ENCODE measurements at regions of chr16 and their contacts with region 1.

Region 1: DNA sequence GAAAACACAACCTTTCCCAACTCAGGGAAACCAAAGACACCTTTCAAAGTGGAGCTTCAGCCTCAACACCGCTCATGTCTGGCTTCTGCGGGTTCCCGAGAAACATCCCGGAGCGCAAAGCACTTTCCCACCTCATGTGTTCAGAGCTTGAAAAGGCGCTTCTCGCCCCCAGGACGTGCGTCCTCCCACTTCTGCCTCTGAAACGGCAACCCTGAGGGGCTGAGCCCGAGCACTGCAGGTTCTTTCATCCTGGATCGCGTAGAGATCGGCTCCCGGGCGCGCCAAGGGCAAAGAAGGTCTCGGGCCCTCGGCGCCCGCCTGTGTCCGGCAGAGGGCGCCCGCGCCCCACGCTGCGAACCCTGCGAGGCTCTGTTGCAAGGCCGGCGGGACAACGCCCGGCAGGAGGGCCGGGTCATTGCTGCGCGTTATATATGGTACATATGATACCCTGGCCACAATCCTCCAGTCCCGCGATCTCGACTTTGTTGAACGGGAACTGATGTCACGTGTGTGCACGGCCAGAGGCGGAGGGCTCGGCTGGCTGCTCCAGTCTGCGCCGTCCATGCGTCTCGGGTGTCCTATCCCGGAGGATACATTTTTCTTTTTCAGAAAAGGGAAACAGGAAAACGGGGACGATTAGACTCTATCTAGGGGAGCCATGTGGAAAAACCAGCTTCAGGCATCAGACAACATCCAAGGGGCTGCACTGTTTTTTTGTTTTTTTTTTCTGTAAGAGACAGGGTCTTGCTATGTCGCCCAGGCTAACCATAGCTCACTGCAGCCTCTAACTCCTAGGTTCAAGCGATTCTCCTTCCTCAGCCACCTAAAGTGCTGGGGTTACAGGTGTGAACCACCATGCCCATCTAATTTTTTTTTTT is 19.1 kb downstream of the COQ7 start:
- DNase-seq: peak; percentile 94
- H3K4me3 Mint-ChIP-seq: peak overlapping the region; percentile 71
- H3K27ac Mint-ChIP-seq: peak overlapping the region; percentile 58
- H3K4me1 Mint-ChIP-seq: peaks cover 19% of the 10 kb centered on the region
- H3K27me3 Mint-ChIP-seq: no peaks in the 10 kb centered on the region
- CTCF ChIP-seq: peak; percentile 99

Region 2: GRCh38 chr16:19105891-19106624 is 19.5 kb after region 1 on chr16:
- CTCF ChIA-PET with region 1: interaction called, 14 read pairs
- intact Hi-C with region 1: no loop called
- DNase-seq: no peak
- H3K4me3 Mint-ChIP-seq: no peak overlapping the region
- H3K27ac Mint-ChIP-seq: no peak overlapping the region
- H3K4me1 Mint-ChIP-seq: peaks cover 32% of the 10 kb centered on the region
- H3K27me3 Mint-ChIP-seq: no peaks in the 10 kb centered on the region
- CTCF ChIP-seq: no peak

Region 3: DNA sequence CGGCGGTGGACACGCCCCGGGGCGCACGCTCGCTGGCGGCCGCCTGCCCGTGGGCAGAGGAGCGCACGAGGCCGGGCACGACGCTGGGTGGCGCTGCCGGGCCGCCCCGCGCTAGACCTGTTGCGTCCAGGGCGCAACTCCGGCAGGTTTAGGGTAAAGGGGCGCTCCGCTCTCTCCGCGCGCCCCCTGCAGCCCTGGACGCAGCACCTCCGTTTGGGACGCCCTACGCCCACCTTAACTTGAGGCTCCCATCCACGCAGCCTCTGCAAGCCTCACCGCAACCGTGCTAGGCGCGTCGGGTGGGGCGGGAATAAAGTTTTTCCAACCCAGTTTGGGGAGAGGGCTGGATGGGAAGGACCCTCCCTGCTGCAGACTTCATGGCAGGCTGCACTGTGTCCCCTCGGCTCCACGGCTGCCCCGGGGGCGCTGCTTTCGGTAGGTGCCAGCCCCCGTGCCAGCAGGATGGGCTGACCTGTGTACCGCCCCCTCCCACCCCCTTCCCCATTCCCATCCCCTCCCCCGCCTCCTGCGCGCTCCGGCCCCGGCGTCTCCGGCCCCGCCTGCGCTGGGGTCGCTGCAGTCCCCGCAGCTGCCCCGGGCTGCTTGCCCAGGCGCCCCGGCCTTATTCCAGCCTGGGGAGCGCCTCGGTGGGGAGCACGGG is 81.3 kb after region 1 on chr16 and contains the start of gene SYT17:
- CTCF ChIA-PET with region 1: interaction called, 3 read pairs
- intact Hi-C with region 1: loop called (anchors 1 kb)
- DNase-seq: peak; percentile 93
- H3K4me3 Mint-ChIP-seq: peak within 1 kb of the TSS; percentile 70
- H3K27ac Mint-ChIP-seq: no peak within 1 kb of the TSS
- H3K4me1 Mint-ChIP-seq: peaks cover 8% of the 10 kb centered on the region
- H3K27me3 Mint-ChIP-seq: peaks cover 18% of the 10 kb centered on the region
- CTCF ChIP-seq: peak; percentile 86
- total RNA-seq, gene SYT17: 10.6 and 16.6 TPM in 2 replicates

Region 4: DNA sequence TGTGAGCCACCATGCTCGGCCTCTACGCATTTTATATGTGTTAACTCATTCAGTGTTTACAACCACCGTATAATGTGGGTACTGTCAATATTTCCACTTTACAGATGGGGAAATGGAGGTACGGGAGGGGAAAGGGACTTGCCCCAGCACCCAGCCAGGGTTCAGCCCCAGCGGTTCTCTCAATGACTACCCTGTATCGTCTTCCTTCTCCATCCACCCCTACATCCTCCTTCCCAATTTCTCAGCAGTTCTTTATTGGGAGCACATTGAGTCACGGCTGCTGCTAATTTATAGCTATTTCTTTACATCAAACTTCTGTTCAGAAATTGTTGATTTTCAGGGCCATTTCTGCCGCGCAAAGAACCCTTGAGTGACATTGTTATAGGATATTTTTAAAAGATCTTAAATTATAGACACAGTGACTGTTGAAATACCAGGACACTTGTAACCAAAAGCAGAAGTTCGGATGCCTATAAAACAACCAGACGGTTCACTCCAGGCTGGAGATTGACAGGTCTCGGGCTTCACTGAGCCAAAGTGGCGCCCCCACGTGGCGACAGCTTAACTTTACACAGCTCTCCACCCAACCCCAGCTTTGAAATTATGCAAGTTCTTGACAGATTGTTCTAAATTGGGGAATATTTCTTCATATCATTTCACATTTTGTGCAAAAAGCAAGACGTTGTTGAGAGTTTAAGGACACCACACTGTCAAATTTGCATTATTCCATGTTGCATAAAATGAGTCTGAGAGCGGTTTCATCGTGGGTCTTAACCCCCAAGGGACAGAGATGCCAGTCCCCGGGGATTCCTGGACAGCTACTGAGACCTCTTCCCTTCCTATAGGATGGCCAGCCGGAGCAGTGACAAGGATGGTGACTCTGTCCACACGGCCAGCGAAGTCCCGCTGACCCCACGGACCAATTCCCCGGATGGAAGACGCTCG is 93.3 kb after region 1 on chr16:
- CTCF ChIA-PET with region 1: interaction called, 10 read pairs
- intact Hi-C with region 1: no loop called
- DNase-seq: peak; percentile 75
- H3K4me3 Mint-ChIP-seq: no peak overlapping the region
- H3K27ac Mint-ChIP-seq: no peak overlapping the region
- H3K4me1 Mint-ChIP-seq: peaks cover 21% of the 10 kb centered on the region
- H3K27me3 Mint-ChIP-seq: no peaks in the 10 kb centered on the region
- CTCF ChIP-seq: peak; percentile 64

Region 5: GRCh38 chr16:19330841-19331397 is 244.4 kb after region 1 on chr16:
- CTCF ChIA-PET with region 1: no interaction called
- intact Hi-C with region 1: no loop called
- DNase-seq: no peak
- H3K4me3 Mint-ChIP-seq: no peak overlapping the region
- H3K27ac Mint-ChIP-seq: no peak overlapping the region
- H3K4me1 Mint-ChIP-seq: no peaks in the 10 kb centered on the region
- H3K27me3 Mint-ChIP-seq: no peaks in the 10 kb centered on the region
- CTCF ChIP-seq: no peak

Region 6: GRCh38 chr16:19375561-19376158 is 289.1 kb after region 1 on chr16:
- CTCF ChIA-PET with region 1: interaction called, 6 read pairs
- intact Hi-C with region 1: loop called (anchors 1 kb)
- DNase-seq: peak; percentile 60
- H3K4me3 Mint-ChIP-seq: no peak overlapping the region
- H3K27ac Mint-ChIP-seq: no peak overlapping the region
- H3K4me1 Mint-ChIP-seq: no peaks in the 10 kb centered on the region
- H3K27me3 Mint-ChIP-seq: no peaks in the 10 kb centered on the region
- CTCF ChIP-seq: peak; percentile 89

Region 7: DNA sequence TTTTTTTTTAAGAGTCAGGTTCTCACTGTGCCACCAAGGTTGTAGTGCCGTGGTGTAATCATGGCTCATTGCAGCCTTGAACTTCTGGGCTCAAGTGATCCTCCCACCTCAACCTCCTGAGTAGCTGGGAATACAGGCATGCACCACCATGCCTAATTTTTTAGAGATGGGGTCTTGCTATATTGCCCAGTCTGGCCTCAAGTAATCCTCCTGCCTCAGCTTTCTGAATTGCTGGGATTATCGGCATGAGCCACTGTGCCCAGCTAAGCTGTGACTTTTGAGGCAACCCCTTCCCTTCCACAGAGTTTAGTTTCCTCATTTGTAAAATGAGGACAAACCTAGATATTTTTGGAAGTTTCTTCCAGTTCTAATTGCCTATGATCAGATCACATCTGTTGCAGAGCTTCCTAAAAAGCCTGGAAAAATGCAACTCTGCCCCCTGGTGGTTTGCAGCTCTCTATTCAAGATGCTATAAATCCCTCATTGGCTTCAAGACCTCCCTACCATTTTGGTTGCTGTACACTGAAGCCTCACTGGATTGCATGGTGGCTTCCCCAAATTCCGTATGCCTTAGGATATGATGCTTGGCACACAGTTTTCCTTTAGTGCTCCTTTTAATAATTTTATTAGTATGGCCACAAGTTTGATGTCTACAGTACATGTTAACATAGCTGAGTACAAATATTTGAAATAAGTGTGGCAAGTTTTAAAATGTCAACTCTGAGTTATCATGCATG is 416.0 kb after region 1 on chr16:
- CTCF ChIA-PET with region 1: interaction called, 7 read pairs
- intact Hi-C with region 1: loop called (anchors 5 kb)
- DNase-seq: peak; percentile 88
- H3K4me3 Mint-ChIP-seq: no peak overlapping the region
- H3K27ac Mint-ChIP-seq: no peak overlapping the region
- H3K4me1 Mint-ChIP-seq: peaks cover 15% of the 10 kb centered on the region
- H3K27me3 Mint-ChIP-seq: no peaks in the 10 kb centered on the region
- CTCF ChIP-seq: peak; percentile 79

Measured in Calu3 (cell line).